CD8-positive, alpha-beta T cell (primary cell): ENCODE measurements at regions of chr17 and their contacts with region 1.

Region 1: DNA sequence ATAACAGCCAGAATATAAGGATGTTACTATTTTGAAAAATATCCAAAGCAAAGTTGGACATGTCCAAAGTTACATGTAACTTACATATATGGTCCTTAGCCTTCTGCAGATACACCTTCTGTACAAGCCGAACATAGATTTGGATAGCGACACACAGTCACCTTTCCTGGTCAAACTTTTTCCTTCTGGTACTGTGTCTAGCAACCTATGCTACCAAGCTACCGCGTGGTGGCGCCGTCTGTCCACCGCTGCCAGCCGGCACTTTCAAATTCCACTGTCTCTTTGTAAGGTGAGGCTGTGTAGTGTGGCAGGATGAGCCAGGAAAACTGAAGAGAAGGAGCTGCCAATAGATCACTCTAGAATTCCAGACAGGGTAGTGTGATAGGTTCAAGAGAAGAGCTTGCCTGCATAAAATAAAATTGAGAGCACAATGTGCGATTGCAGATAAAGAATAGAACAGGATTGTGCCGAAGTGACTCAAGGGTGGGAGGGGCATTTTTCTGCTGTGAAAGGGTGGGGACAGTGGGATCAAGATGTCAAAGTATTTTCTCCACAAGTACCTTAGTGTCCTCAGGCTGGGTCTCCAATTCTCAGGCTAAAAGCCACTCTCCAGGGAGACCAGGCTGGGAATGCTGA is 366.9 kb downstream of the SLC39A11 start:
- DNase-seq: peak in 8 of 9 experiments; percentile 10 to 65 (median 48)
- ATAC-seq: peak; percentile 37
- H3K4me3 ChIP-seq: no peak overlapping the region
- H3K4me3 Mint-ChIP-seq: peak overlapping the region; percentile 7
- H3K27ac ChIP-seq: no peak overlapping the region
- H3K27ac Mint-ChIP-seq: peak overlapping the region; percentile 28
- H3K4me1 ChIP-seq: peaks cover 29% of the 10 kb centered on the region
- H3K4me1 Mint-ChIP-seq: peaks cover 32% of the 10 kb centered on the region
- H3K27me3 ChIP-seq: no peaks in the 10 kb centered on the region
- H3K27me3 Mint-ChIP-seq: no peaks in the 10 kb centered on the region
- CTCF ChIP-seq: peak; percentile 92

Region 2: GRCh38 chr17:72985881-72986720 is 260.6 kb after region 1 on chr17:
- CTCF ChIA-PET with region 1: interaction called, 38 read pairs
- POLR2A ChIA-PET with region 1: interaction called, 3 read pairs
- intact Hi-C with region 1: loop called (anchors 2 to 5 kb)
- DNase-seq: peak; percentile 17 to 63 (median 39)
- ATAC-seq: no peak
- H3K4me3 ChIP-seq: no peak overlapping the region
- H3K4me3 Mint-ChIP-seq: no peak overlapping the region
- H3K27ac ChIP-seq: no peak overlapping the region
- H3K27ac Mint-ChIP-seq: no peak overlapping the region
- H3K4me1 ChIP-seq: no peaks in the 10 kb centered on the region
- H3K4me1 Mint-ChIP-seq: peaks cover 2% of the 10 kb centered on the region
- H3K27me3 ChIP-seq: no peaks in the 10 kb centered on the region
- H3K27me3 Mint-ChIP-seq: no peaks in the 10 kb centered on the region
- CTCF ChIP-seq: peak; percentile 66

Region 3: DNA sequence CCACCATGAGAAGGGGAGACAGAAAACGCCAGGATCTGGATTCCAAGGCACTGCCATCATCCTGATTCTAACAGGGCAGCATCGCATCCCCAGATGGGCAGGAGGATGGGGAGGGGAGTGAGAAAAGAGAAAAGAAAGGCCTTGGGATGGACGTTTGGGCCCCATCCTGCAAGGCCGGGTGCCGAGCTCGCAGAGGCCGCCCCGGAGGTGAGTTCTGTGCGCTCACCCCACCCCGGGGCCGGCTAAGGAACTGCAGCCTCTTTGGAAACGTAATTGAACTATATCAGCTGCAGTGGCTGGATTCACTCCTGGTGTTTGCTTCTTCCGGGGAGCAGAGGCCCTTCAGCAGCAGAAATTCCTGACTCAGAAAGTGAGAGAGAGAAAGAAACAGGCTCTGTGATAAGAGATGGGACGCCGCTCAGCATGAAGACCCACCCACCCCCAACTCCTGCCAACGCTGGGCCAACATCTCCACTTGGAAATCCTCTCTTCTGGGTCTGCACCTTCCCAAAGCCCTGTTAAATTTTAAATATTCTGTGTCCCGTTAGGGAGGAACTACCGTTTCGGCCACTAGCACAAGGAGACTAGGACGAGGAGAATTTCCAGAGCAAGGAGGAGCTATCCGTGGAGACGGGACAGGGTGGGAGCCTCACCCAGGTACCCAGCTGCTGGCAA is 430.8 kb after region 1 on chr17:
- CTCF ChIA-PET with region 1: interaction called, 69 read pairs
- POLR2A ChIA-PET with region 1: no interaction called
- intact Hi-C with region 1: loop called (anchors 1 kb)
- DNase-seq: peak; percentile 19 to 70 (median 53)
- ATAC-seq: peak; percentile 78
- H3K4me3 ChIP-seq: no peak overlapping the region
- H3K4me3 Mint-ChIP-seq: no peak overlapping the region
- H3K27ac ChIP-seq: no peak overlapping the region
- H3K27ac Mint-ChIP-seq: no peak overlapping the region
- H3K4me1 ChIP-seq: no peaks in the 10 kb centered on the region
- H3K4me1 Mint-ChIP-seq: peaks cover 3% of the 10 kb centered on the region
- H3K27me3 ChIP-seq: peaks cover 0 to 4% of the 10 kb centered on the region in 2 experiments
- H3K27me3 Mint-ChIP-seq: peaks cover 29% of the 10 kb centered on the region
- CTCF ChIP-seq: peak; percentile 62

Region 4: DNA sequence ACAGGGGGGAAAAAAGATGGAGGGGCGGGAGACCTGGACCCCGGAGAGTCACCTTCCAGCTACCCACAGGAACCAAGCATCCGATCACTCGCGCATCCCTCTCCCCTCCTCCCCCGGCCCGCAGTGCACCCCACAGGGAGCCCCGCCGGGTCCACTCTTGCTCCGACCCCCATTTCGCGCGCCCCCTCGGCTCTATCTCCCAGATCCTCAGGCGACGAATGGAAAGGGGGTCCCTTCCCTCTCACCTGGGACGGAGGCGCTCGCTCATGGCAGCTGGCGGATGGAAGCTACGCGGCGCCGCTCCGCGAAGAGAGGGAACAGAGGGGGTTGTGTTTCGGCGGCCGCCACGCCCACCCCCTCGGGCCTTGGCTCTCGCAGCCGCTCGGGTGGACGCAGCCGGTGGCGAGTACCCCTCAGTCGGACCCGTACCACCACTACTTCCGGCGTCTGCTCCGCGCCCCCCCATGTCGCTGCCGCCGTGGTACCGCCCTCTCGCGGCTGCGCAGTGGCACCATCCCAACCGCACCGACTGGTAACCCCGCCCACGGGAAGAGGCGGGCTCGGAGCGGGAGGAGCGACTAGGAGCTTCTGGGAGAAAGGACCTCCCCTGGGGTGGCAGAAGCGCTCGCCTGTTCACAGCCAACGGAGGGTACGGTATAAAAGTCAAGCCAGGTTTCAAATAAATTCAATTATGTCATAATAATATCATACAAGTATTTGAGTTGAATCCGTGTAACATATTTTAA is 506.5 kb after region 1 on chr17:
- CTCF ChIA-PET with region 1: interaction called, 7 read pairs
- POLR2A ChIA-PET with region 1: no interaction called
- intact Hi-C with region 1: loop called in 1 of 2 experiments (anchors 5 kb)
- DNase-seq: peak; percentile 93 to 99 (median 96)
- ATAC-seq: peak; percentile 95
- H3K4me3 ChIP-seq: peak overlapping the region; percentile 95 to 100
- H3K4me3 Mint-ChIP-seq: peak overlapping the region; percentile 97
- H3K27ac ChIP-seq: peak overlapping the region; percentile 75 to 84
- H3K27ac Mint-ChIP-seq: peak overlapping the region; percentile 98
- H3K4me1 ChIP-seq: peaks cover 46% of the 10 kb centered on the region
- H3K4me1 Mint-ChIP-seq: peaks cover 71% of the 10 kb centered on the region
- H3K27me3 ChIP-seq: no peaks in the 10 kb centered on the region
- H3K27me3 Mint-ChIP-seq: no peaks in the 10 kb centered on the region
- CTCF ChIP-seq: no peak

Region 5: GRCh38 chr17:73311781-73312641 is 586.5 kb after region 1 on chr17 and contains the start of gene CDC42EP4:
- CTCF ChIA-PET with region 1: interaction called, 3 read pairs
- POLR2A ChIA-PET with region 1: no interaction called
- intact Hi-C with region 1: loop called in 1 of 2 experiments (anchors 5 kb)
- DNase-seq: peak; percentile 59 to 89 (median 82)
- ATAC-seq: peak; percentile 90
- H3K4me3 ChIP-seq: peak within 1 kb of the TSS; percentile 61 to 86
- H3K4me3 Mint-ChIP-seq: peak within 1 kb of the TSS; percentile 87
- H3K27ac ChIP-seq: peak within 1 kb of the TSS; percentile 11 to 64
- H3K27ac Mint-ChIP-seq: peak within 1 kb of the TSS; percentile 62
- H3K4me1 ChIP-seq: peaks cover 14% of the 10 kb centered on the region
- H3K4me1 Mint-ChIP-seq: peaks cover 17% of the 10 kb centered on the region
- H3K27me3 ChIP-seq: no peaks in the 10 kb centered on the region
- H3K27me3 Mint-ChIP-seq: no peaks in the 10 kb centered on the region
- CTCF ChIP-seq: no peak
- total RNA-seq, gene CDC42EP4: 3.5 to 4.4 TPM